ENCODE measurements at regions of chr22 and their contacts with region 1.

Region 1: DNA sequence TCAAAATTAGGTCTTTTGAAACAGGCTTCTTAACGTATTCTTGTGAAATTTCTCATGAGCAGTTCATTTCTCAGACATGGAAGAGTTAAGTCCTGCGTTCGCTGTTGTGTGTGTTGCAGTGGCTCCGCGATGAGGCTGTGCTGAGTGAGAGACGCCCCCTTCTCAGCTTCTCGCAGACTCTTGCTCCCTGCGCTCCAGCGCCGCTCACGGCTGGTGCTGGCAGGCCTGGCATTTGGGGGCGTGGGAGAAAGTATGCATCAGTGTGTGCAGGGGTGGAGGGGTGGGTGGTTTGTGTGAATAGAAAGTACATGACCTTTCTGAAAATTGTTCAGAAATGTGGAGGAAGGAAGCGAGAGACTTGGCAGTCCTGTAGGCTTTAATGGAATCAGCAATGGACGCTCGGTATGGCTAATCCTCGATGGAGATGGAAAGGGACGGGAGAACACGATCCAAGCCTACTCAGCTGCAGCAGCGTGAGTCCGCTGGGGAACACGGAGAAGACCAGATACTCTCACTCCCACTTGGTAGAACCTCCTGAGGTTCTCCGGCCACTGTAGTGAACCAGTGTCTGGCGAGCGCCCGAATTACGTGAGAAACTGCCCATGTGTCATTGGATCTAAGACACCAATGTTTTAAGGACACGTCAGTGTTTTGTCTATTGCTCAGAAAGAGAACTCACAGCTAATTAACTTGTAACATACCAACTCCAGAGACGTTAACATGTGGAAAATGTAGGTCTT is 5.9 kb downstream of the TAB1 start:
- DNase-seq: no peak
- ATAC-seq: no peak

Region 2: GRCh38 chr22:38907767-38908166 is 497.7 kb before region 1 on chr22:
- intact Hi-C with region 1: no loop called
- DNase-seq: no peak
- ATAC-seq: no peak

Region 3: DNA sequence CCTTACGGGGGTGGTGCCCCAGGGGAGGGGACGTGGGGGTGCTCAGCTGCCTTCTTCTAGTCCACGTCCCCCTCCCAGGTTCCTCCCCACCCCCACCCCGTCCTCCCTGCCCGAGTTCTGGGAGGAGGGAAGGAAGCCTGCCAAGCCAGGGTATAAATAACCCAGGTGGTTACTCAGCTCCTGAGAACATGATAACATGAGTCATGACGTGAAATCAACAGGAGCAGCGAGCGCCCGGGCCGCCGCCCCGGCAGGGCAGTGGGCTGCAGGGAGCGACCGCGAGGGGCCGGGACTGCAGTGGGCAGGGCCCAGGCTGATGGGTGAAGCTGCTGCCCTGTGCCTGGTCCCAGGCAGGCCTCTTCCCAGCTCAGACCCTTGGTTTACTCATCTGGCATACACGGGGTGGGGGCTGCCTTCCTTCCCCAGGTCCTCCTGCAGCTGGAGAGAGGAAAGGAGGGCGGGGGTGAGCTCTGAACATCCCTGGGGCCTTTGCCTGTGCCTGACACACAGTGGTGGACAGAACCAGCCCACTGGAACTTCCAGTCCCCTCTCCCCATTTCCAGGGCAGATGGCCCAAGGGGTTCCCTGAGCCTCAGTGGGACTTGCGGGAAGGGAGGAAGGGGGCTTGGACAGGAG is 152.0 kb before region 1 on chr22:
- intact Hi-C with region 1: no loop called
- DNase-seq: no peak
- ATAC-seq: peak; percentile 91

Region 4: GRCh38 chr22:39502109-39502788 is 96.7 kb after region 1 on chr22 and contains the start of gene MIEF1:
- intact Hi-C with region 1: loop called in 1 of 2 experiments (anchors 10 kb)
- DNase-seq: peak; percentile 98 to 99
- ATAC-seq: peak; percentile 96
- total RNA-seq, gene MIEF1: 33.1 to 36.3 TPM

Region 5: DNA sequence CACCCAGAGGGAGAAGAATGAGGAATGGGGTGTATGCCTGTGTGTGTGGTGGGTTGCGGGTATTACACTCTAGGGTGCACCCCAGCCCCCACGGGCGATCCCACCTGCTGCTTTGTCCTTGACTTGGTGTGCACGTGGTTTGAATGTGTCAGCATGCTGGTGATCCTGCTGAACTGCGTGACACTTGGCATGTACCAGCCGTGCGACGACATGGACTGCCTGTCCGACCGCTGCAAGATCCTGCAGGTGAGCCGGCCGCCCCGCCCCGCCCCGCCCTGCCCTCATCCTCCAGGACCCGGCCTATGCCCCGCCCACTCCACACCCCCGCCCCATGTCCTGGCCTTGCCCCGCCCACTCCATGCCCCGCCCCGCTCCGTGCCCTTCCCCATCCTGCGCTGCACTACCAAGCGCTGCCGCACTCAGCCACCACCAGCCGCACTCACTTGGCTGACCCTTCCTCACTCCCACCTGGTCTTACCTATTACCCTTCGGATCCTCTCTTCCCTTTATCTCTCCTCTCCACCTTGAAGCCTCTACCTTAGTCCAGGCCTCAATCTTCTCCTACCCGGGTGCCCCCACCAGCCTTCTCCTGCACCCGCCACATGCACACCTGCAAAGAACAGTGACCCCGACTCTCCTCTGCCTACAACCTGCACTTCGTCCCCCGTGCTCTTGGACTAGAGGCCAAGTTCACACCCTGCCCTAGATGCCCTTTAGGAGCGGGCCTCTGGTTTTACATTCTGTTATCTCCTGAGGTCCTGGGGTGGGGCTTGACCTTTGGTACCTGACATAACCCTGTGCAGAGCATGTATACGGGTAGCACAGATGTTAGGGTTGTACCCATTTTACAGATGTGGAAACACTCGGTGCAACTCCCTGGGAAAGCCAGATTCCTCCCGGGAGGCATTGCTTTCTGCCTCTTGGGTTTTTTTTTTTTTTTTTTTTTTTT is 192.8 kb after region 1 on chr22:
- intact Hi-C with region 1: no loop called
- DNase-seq: peak; percentile 85 to 94
- ATAC-seq: peak; percentile 99